ENCODE measurements at regions of chr7 and their contacts with region 1.

Region 1: DNA sequence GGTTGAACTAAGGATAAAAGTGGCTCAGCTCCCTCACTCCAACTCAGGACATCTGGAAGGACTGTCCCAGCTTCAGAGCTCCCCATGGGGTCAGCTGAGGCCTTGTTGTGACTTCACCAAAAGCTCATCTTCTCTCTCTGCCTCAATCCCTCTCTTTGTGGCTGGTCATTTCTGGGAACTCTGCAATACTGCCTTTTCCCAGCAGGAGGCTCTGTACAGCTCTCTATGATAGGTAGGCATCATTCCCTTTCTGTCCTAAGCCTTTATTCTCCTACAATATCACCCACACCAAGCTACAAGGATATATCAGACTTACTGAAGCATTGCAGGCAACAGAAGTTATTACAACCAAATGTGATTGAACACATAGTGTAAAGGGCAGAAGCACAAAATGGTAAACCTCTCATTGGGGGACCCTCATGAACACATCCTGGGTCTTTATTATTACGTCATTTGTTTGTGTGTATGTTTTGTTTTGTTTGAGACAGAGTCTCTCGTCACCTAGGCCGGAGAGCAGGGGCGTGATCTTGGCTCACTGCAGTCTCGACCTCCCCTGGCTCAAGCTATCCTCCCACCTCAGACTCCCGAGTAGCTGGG is 36.7 kb upstream of the PRPS1L1 start:
- DNase-seq: no peak
- CTCF ChIP-seq: peak; percentile 62

Region 2: DNA sequence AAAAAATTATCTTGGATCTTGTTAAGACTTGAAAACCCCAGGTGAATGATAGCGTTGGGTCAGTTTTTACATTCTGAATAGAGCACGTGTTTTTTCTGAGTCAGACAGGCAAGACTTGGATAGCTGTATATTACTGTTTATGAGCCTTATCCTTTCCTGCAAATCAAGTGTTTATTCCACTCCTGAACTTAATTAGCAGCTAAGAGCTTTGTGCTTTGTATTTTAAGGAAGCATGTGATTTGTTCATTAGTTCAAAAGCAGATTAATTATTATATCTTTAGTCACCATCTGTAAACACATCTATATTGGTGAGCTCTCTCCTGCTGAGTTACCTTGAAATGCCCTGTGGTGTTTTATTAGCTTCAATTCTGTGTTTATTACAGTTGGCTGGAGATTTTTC is 61.9 kb after region 1 on chr7:
- in situ Hi-C with region 1: no loop called
- DNase-seq: no peak
- CTCF ChIP-seq: no peak

Region 3: DNA sequence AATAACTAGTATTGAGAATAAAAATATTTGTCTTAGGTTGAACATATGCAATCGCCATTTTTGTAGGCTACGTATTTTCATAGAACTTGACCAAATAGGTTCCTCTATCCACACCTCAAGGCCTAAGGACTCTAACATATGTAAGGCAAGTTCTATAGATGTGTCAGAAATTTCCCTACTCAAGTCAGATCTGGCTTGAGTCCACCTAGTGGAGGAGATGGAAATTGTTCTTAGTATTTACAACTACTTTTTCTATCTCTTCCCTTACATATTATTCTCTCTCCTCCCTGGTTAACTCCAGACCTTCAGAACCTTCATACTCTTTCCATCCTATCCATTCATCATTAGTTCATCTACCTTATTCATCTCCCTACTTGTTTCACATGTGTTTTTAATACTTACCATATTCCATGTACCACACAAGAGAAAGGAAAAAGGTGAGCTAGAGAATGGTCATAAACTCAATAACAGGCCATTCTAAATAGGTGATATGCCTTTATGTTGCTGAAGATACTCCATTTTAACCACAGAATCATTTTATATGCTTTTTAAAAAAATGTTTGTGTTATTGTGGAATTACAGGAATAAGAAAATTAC is 256.7 kb after region 1 on chr7:
- in situ Hi-C with region 1: loop called (anchors 25 kb)
- DNase-seq: peak; percentile 27
- CTCF ChIP-seq: peak; percentile 58